Sigmoid colon (tissue), 7 donors: ENCODE measurements at regions of chr2 and their contacts with region 1.

Region 1: DNA sequence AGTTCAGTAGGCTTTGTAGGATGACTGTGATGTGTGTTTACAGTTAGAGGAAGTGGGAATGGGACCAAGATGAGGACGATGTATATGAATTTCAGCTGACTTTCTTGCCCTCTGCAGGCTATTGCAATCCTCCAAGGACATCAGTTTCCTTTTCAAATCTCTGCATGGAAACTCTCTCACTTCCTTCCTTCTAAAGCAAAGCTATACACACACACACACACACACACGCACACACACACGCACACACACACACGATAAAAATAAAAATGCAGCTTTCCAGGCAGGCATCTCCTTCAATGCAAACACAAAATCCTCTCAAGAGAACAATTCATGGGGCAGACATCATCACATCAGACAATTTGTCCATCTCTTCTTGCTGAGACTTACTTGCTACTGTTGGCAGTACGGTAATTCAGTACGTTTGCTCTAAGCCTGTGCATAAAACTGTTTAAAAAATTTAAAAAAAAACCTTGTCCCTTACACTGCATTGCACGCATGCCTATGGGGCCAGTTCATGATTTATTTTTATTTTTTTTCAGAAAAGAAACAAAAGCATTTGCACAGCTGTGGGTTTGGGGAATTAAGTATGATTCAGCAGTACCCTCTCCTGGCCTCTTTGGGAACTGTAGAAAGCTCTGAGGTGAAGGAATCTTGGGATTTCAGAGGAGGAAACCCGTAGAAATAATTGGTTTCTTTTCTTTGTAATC is 27.1 kb upstream of the ICOS start:
- DNase-seq: no peak
- H3K4me3 ChIP-seq: peak overlapping the region in 3 of 4 donors; percentile 13 to 31 (median 22)
- H3K27ac ChIP-seq: peak overlapping the region; percentile 21 to 60 (median 36)
- H3K4me1 ChIP-seq: peaks cover 0 to 18% (median 15%) of the 10 kb centered on the region in 4 donors
- H3K27me3 ChIP-seq: no peaks in the 10 kb centered on the region
- CTCF ChIP-seq: peak; percentile 61 to 80 (median 65)
- EP300 ChIP-seq: no peak
- POLR2A ChIP-seq: no peak

Region 2: GRCh38 chr2:203484266-203485112 is 424.9 kb before region 1 on chr2:
- intact Hi-C with region 1: loop called (anchors 1 kb)
- DNase-seq: no peak
- H3K4me3 ChIP-seq: no peak overlapping the region
- H3K27ac ChIP-seq: no peak overlapping the region
- H3K4me1 ChIP-seq: no peaks in the 10 kb centered on the region
- H3K27me3 ChIP-seq: no peaks in the 10 kb centered on the region
- CTCF ChIP-seq: peak; percentile 53 to 55 (median 53)
- EP300 ChIP-seq: no peak
- POLR2A ChIP-seq: no peak

Region 3: GRCh38 chr2:203688798-203689197 is 220.6 kb before region 1 on chr2:
- intact Hi-C with region 1: no loop called
- DNase-seq: no peak
- H3K4me3 ChIP-seq: no peak overlapping the region
- H3K27ac ChIP-seq: no peak overlapping the region
- H3K4me1 ChIP-seq: peaks cover 0 to 11% (median 2%) of the 10 kb centered on the region in 4 donors
- H3K27me3 ChIP-seq: no peaks in the 10 kb centered on the region
- CTCF ChIP-seq: no peak
- EP300 ChIP-seq: no peak
- POLR2A ChIP-seq: no peak

Region 4: DNA sequence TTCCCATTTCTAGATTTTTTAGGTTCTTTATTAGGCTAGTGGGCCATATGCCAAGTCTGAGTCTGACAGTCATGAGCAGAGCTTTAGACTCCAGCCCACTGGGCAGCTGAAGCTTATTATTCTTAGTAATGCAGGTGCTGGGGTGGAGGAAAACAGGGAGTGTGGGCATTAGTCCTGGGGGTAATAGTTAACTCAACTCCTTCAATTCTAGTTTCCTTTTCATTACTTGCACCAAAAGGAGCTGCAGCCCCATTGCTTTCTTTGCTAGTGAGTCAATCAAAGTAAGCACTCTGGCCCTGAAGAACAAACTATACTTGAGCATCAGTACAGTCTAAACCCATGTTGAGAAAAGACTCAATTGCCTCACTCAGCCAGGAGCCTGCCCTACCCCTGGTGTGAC is 62.7 kb after region 1 on chr2:
- intact Hi-C with region 1: no loop called
- DNase-seq: no peak
- H3K4me3 ChIP-seq: no peak overlapping the region
- H3K27ac ChIP-seq: no peak overlapping the region
- H3K4me1 ChIP-seq: peaks cover 0 to 15% (median 7%) of the 10 kb centered on the region in 4 donors
- H3K27me3 ChIP-seq: no peaks in the 10 kb centered on the region
- CTCF ChIP-seq: no peak
- EP300 ChIP-seq: no peak
- POLR2A ChIP-seq: no peak